WTC11 (cell line): ENCODE measurements at regions of chr2 and their contacts with region 1.

Region 1: DNA sequence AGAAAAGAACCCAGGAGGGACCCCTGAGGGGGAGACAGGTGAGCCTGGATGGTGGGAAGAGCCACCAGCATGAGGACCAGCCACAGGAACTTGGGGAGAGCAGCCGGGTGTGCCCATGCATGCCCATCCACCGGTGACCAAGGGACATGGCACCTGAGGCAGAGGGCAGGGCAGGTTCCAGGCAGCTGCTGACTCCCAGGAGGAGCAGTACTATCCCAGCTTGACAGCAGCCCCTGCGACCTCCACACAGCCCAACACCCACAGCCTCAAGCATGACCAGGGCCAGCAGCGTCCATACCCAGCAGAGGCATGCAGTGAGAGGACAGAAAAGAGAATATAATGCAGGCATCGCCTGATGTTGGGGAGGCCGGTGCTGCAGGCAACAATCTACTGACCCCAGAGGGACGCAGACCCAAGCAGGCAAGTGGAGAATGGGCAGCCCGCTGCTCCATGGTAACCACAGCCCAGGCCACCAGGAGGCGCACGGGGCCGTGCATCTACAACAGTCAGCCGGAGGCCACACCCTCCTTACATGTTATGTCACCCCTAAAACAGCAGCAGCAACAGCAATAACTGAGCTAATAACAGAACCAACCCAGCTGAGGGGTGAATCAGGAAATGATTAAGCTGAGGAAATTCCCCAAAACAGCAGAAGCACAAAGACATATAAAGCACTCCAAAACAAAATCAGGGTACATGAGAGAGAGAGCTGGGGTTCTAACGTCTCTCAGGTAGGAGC is 44.1 kb downstream of the ANKMY1 start:
- DNase-seq: peak; percentile 90
- ATAC-seq: peak; percentile 98
- H3K4me3 Mint-ChIP-seq: no peak overlapping the region
- H3K27ac Mint-ChIP-seq: no peak overlapping the region
- H3K4me1 Mint-ChIP-seq: no peaks in the 10 kb centered on the region
- H3K27me3 Mint-ChIP-seq: peaks cover 17% of the 10 kb centered on the region
- CTCF ChIP-seq: peak; percentile 80

Region 2: GRCh38 chr2:240392741-240393640 is 120.7 kb before region 1 on chr2:
- CTCF ChIA-PET with region 1: no interaction called
- POLR2A ChIA-PET with region 1: no interaction called
- DNase-seq: peak; percentile 7
- ATAC-seq: peak; percentile 43
- H3K4me3 Mint-ChIP-seq: no peak overlapping the region
- H3K27ac Mint-ChIP-seq: no peak overlapping the region
- H3K4me1 Mint-ChIP-seq: peaks cover 6% of the 10 kb centered on the region
- H3K27me3 Mint-ChIP-seq: no peaks in the 10 kb centered on the region
- CTCF ChIP-seq: no peak

Region 3: GRCh38 chr2:240499309-240500301 is 14.1 kb before region 1 on chr2:
- CTCF ChIA-PET with region 1: interaction called, 17 read pairs
- POLR2A ChIA-PET with region 1: no interaction called
- DNase-seq: no peak
- ATAC-seq: no peak
- H3K4me3 Mint-ChIP-seq: no peak overlapping the region
- H3K27ac Mint-ChIP-seq: no peak overlapping the region
- H3K4me1 Mint-ChIP-seq: no peaks in the 10 kb centered on the region
- H3K27me3 Mint-ChIP-seq: peaks cover 10% of the 10 kb centered on the region
- CTCF ChIP-seq: no peak

Region 4: DNA sequence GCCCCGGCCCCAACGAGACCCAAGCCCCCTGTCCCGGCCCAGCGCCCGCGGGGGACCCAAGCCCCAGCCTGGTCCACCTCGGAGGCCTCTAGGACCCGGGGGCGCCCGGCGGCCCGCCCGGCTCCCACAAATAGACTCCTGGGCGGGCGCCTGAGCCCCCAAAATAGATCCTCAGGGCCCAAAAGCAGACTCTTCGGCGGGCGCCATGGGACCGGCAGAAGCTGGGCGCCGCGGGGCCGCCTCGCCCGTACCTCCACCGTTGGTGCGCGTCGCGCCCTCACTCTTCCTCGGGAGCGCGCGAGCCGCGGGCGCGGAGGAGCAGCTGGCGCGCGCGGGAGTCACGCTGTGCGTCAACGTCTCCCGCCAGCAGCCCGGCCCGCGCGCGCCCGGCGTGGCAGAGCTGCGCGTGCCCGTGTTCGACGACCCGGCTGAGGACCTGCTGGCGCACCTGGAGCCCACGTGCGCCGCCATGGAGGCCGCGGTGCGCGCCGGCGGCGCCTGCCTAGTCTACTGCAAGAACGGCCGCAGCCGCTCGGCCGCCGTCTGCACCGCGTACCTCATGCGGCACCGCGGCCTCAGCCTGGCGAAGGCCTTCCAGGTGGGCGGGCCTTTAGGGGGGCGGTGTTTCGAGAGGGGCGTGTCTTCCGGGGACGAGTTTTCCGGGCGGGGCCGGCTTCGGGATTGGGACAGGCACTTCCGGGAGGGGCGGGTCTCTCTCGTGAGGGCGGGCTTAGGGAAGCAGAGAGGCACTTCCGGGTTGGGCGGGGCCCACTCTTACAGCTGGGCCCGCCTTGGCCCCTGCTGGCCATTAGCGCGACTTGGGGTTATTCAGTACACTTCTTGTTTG is 47.0 kb after region 1 on chr2:
- CTCF ChIA-PET with region 1: interaction called, 24 read pairs
- POLR2A ChIA-PET with region 1: no interaction called
- DNase-seq: peak; percentile 100
- ATAC-seq: peak; percentile 77
- H3K4me3 Mint-ChIP-seq: peak overlapping the region; percentile 76
- H3K27ac Mint-ChIP-seq: no peak overlapping the region
- H3K4me1 Mint-ChIP-seq: peaks cover 33% of the 10 kb centered on the region
- H3K27me3 Mint-ChIP-seq: peaks cover 32% of the 10 kb centered on the region
- CTCF ChIP-seq: no peak

Region 5: GRCh38 chr2:240566203-240567136 is 52.8 kb after region 1 on chr2:
- CTCF ChIA-PET with region 1: interaction called, 12 read pairs
- POLR2A ChIA-PET with region 1: no interaction called
- DNase-seq: peak; percentile 86
- ATAC-seq: peak; percentile 67
- H3K4me3 Mint-ChIP-seq: peak overlapping the region; percentile 69
- H3K27ac Mint-ChIP-seq: no peak overlapping the region
- H3K4me1 Mint-ChIP-seq: peaks cover 25% of the 10 kb centered on the region
- H3K27me3 Mint-ChIP-seq: peaks cover 28% of the 10 kb centered on the region
- CTCF ChIP-seq: peak; percentile 94

Region 6: GRCh38 chr2:240579771-240580614 is 66.3 kb after region 1 on chr2:
- CTCF ChIA-PET with region 1: interaction called, 13 read pairs
- POLR2A ChIA-PET with region 1: no interaction called
- DNase-seq: peak; percentile 77
- ATAC-seq: peak; percentile 69
- H3K4me3 Mint-ChIP-seq: no peak overlapping the region
- H3K27ac Mint-ChIP-seq: peak overlapping the region; percentile 49; the same call in 1 of the 2 replicates
- H3K4me1 Mint-ChIP-seq: peaks cover 21% of the 10 kb centered on the region
- H3K27me3 Mint-ChIP-seq: no peaks in the 10 kb centered on the region
- CTCF ChIP-seq: peak; percentile 42